ENCODE measurements at regions of chr17 and their contacts with region 1.

Region 1: DNA sequence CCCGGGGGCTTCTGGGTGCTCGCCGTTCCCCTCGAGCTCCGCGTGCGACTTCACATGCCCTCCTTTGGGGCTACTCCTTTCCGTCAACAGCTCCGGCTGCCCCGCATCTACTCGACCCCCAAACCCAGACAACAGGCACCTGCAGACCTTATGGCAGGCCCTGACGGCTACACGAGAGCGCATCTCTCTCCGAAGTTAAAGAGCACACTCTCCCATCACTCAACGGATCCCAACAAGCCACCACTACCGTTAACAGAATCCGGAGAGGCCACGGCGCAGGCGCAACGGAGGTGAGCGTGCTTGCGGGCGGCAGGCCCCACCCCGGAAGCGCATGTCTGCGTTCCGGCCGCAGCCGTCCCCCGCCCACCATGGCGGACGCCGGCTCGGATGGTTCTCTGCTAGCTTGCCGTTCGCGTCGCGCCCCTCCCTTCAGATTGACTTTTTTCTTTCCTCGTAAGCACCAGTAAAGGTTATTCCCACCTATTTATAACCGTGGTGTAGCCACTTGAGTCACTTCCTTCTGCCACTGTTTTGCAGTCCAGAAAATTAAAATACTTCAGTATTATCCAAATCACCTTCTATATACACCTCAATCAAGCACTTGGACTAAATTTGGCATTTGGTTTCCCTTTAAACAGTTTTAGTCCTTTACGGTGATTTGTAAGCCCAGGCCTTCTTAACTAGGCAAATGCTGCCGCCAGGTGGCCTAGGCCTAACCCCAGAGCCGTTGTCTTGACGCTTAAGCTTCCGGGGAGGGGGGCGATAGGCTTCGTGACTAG is at the start of gene POLG2:
- DNase-seq: peak; percentile 93
- H3K4me3 ChIP-seq: peak within 1 kb of the TSS; percentile 41 to 56 (median 50)
- H3K27ac ChIP-seq: peak within 1 kb of the TSS in 2 of 3 donors; percentile 26 to 76
- H3K4me1 ChIP-seq: peaks cover 10 to 40% of the 10 kb centered on the region in 2 donors
- H3K27me3 ChIP-seq: no peaks in the 10 kb centered on the region
- CTCF ChIP-seq: peak in 4 of 6 experiments; percentile 31 to 43 (median 34)
- POLR2A ChIP-seq: peak in 1 of 2 donors; percentile 56
- total RNA-seq, gene POLG2: 10.6 to 15.0 (median 13.1) TPM

Region 2: GRCh38 chr17:64306850-64307463 is 190.0 kb before region 1 on chr17:
- intact Hi-C with region 1: loop called (anchors 10 kb)
- DNase-seq: peak; percentile 70 to 72
- H3K4me3 ChIP-seq: no peak overlapping the region
- H3K27ac ChIP-seq: no peak overlapping the region
- H3K4me1 ChIP-seq: peaks cover 12 to 18% of the 10 kb centered on the region in 2 donors
- H3K27me3 ChIP-seq: no peaks in the 10 kb centered on the region
- CTCF ChIP-seq: peak; percentile 65 to 82 (median 76)
- POLR2A ChIP-seq: no peak